Heart left ventricle (tissue), 16 donors: ENCODE measurements at regions of chr9 and their contacts with region 1.

Region 1: DNA sequence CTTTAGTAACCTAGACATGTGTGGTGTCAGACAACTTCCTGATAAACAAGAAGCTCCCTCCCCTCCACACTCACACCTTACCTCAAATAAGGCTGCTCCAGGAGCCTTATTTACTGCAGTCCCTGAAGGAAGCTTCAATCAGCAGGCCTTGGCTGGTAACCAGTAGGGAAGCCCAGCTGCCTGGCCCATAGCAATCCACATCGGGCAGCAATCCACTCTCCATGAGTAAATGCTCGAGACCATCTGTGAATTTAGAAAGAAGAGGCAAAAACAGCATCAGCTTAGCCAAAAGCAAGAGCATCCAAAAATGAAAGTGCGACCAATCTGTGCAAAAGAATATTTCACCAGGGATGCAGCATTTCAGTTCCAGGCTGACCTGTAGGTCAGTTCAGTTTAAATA is 213.3 kb upstream of the TUSC1 start:
- DNase-seq: no peak
- ATAC-seq: no peak
- H3K4me3 ChIP-seq: no peak overlapping the region
- H3K27ac ChIP-seq: no peak overlapping the region
- H3K4me1 ChIP-seq: no peaks in the 10 kb centered on the region
- H3K27me3 ChIP-seq: no peaks in the 10 kb centered on the region
- CTCF ChIP-seq: no peak
- POLR2A ChIP-seq: no peak

Region 2: GRCh38 chr9:25830381-25830780 is 61.1 kb before region 1 on chr9:
- intact Hi-C with region 1: loop called in 1 of 10 experiments (anchors 10 kb)
- DNase-seq: no peak
- ATAC-seq: no peak
- H3K4me3 ChIP-seq: no peak overlapping the region
- H3K27ac ChIP-seq: no peak overlapping the region
- H3K4me1 ChIP-seq: no peaks in the 10 kb centered on the region
- H3K27me3 ChIP-seq: no peaks in the 10 kb centered on the region
- CTCF ChIP-seq: no peak
- POLR2A ChIP-seq: no peak

Region 3: DNA sequence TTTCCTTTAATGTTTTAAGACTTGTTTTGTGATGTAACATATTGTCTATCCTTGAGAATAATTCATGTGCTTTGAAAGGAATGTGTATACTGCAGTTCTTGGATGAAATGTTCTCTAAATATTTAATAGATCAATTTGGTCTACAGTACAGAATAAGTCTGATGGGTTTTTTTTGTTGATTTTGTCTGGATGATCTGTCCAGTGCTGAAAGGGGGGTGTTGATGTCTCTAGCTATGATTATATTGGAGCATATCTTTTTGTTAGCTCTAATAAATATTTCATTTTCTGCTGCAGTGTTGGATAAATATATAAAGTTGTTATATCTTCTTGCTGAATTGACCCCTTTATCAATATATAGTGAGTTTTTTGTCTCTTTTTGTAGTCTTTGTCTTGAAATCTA is 56.7 kb after region 1 on chr9:
- intact Hi-C with region 1: loop called in 1 of 10 experiments (anchors 10 kb)
- DNase-seq: no peak
- ATAC-seq: no peak
- H3K4me3 ChIP-seq: no peak overlapping the region
- H3K27ac ChIP-seq: no peak overlapping the region
- H3K4me1 ChIP-seq: no peaks in the 10 kb centered on the region
- H3K27me3 ChIP-seq: no peaks in the 10 kb centered on the region
- CTCF ChIP-seq: no peak
- POLR2A ChIP-seq: no peak